Stomach (tissue), 19 donors: ENCODE measurements at regions of chr2 and their contacts with region 1.

Region 1: GRCh38 chr2:71303849-71304248 is 27.7 kb upstream of the ZNF638 start:
- DNase-seq: no peak
- H3K4me3 ChIP-seq: no peak overlapping the region
- H3K27ac ChIP-seq: no peak overlapping the region
- H3K4me1 ChIP-seq: no peaks in the 10 kb centered on the region
- H3K27me3 ChIP-seq: no peaks in the 10 kb centered on the region
- CTCF ChIP-seq: no peak
- EP300 ChIP-seq: no peak
- POLR2A ChIP-seq: no peak

Region 2: GRCh38 chr2:71122387-71123298 is 181.2 kb before region 1 on chr2:
- intact Hi-C with region 1: no loop called
- DNase-seq: no peak
- H3K4me3 ChIP-seq: no peak overlapping the region
- H3K27ac ChIP-seq: no peak overlapping the region
- H3K4me1 ChIP-seq: peaks cover 0 to 18% (median 9%) of the 10 kb centered on the region in 4 donors
- H3K27me3 ChIP-seq: no peaks in the 10 kb centered on the region
- CTCF ChIP-seq: no peak
- EP300 ChIP-seq: no peak
- POLR2A ChIP-seq: no peak

Region 3: GRCh38 chr2:71510196-71510807 is 206.5 kb after region 1 on chr2:
- intact Hi-C with region 1: loop called (anchors 5 kb)
- DNase-seq: peak; percentile 71 to 83
- H3K4me3 ChIP-seq: no peak overlapping the region
- H3K27ac ChIP-seq: no peak overlapping the region
- H3K4me1 ChIP-seq: peaks cover 0 to 4% (median 1%) of the 10 kb centered on the region in 4 donors
- H3K27me3 ChIP-seq: no peaks in the 10 kb centered on the region
- CTCF ChIP-seq: peak in 5 of 7 experiments; percentile 81 to 90 (median 82)
- EP300 ChIP-seq: no peak
- POLR2A ChIP-seq: no peak